ENCODE measurements at regions of chr7 and their contacts with region 1.

Region 1: DNA sequence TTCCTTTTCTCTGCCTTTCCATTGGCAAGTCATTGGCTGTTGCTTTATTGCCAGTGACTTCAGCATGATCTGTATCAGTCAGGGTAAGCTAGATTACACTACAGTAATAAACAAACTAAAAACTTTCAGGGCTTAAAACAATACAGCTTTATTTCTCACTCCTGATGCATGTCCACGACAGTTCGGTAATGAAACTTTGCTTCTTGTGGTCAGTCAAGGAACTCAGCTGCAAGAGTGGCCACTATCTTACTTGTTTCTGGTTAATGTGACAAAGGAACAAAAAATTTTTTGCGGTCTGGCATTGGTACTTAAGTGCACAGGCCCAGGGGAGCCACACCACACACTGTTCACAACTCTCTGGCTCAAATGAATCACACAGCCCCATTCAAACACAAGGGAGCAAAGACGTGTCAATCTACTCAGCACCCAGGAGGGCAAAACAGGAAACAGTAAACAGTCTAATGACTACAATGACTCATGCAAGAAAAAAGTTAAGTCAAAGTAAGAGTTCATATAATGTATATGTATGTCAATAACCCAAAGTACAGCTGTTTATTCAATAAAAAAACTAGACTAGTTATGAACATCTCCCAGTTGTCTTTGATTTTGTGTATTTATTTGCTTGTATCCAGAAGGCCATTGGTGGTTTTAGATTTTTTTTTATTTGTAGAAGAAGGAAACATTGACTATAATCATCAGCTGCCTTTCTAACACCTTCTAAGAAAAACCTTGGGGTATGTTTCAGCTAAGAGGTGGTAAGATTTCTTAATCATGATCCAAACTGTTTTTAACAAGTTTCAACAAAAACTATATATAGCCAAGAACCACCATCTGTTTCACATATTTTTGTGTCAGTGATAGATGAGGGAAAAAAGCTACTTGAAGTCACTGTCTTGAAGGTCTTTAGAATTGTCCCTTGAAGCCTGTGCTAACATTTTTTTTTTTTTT is 134.4 kb upstream of the FAM3C start:
- DNase-seq: peak in 4 of 5 donors; percentile 20 to 75 (median 42)
- H3K4me3 ChIP-seq: no peak overlapping the region
- H3K4me3 Mint-ChIP-seq: peak overlapping the region in 6 of 7 donors; percentile 1 to 59 (median 24)
- H3K27ac ChIP-seq: no peak overlapping the region
- H3K27ac Mint-ChIP-seq: peak overlapping the region; percentile 7 to 94 (median 66)
- H3K4me1 ChIP-seq: no peaks in the 10 kb centered on the region
- H3K4me1 Mint-ChIP-seq: peaks cover 20 to 27% (median 20%) of the 10 kb centered on the region in 3 donors
- H3K27me3 ChIP-seq: no peaks in the 10 kb centered on the region
- H3K27me3 Mint-ChIP-seq: peaks cover 0 to 1% of the 10 kb centered on the region in 2 donors

Region 2: GRCh38 chr7:121341933-121342332 is 188.6 kb before region 1 on chr7:
- CTCF ChIA-PET with region 1: no interaction called
- POLR2A ChIA-PET with region 1: interaction called, 11 read pairs
- DNase-seq: no peak
- H3K4me3 ChIP-seq: no peak overlapping the region
- H3K4me3 Mint-ChIP-seq: no peak overlapping the region
- H3K27ac ChIP-seq: no peak overlapping the region
- H3K27ac Mint-ChIP-seq: peak overlapping the region in 1 of 8 donors; percentile 7
- H3K4me1 ChIP-seq: no peaks in the 10 kb centered on the region
- H3K4me1 Mint-ChIP-seq: no peaks in the 10 kb centered on the region
- H3K27me3 ChIP-seq: no peaks in the 10 kb centered on the region
- H3K27me3 Mint-ChIP-seq: no peaks in the 10 kb centered on the region